Esophagus squamous epithelium (tissue), 5 donors: ENCODE measurements at regions of chr19 and their contacts with region 1.

Region 1: GRCh38 chr19:36172852-36173251 is 20.6 kb upstream of the COX7A1 start:
- DNase-seq: no peak
- H3K4me3 ChIP-seq: no peak overlapping the region
- H3K27ac ChIP-seq: no peak overlapping the region
- H3K4me1 ChIP-seq: peaks cover 10 to 26% (median 15%) of the 10 kb centered on the region in 3 donors
- H3K27me3 ChIP-seq: no peaks in the 10 kb centered on the region
- CTCF ChIP-seq: no peak
- POLR2A ChIP-seq: no peak

Region 2: DNA sequence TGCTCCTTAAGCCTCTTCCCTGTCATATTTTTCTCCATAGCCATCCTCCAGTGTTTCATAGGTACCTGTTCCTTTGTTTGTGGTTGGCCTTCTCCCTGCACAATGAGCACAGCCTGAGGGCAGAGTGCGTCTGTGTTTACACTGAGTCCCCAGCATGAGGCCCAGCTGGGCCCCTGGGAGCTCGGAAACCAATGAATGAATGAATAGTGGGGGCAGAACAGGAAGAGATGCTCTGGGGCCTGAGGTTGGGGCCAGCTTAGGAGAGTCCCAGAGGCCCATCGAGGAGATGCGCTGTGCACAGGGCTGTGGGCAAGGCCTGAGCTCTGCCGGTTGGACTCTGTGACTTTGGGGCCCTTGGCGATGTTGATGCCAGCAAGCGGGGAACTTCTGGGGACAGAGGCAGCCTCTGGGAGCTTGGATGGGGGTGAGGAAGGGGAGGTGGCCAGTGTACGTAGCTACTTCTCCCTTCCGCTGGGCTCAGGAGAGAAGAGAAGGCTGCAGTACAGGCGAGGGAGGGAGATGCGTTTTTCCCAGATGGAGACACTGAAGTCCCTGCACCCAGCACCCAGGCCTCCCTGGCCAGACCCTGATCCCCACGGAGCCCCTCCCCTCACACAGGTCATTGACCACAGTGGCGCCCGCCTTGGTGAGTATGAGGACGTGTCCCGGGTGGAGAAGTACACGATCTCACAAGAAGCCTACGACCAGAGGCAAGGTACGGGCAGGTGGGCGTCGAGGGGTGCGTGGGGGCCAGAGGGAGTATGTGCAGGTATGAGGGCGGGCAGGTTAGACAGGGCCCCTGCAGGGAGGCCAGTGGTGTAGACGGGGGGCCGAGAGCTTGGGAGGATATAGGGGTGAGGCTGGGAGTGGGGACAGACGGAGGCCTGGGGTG is 52.5 kb before region 1 on chr19:
- intact Hi-C with region 1: loop called (anchors 5 kb)
- DNase-seq: no peak
- H3K4me3 ChIP-seq: no peak overlapping the region
- H3K27ac ChIP-seq: no peak overlapping the region
- H3K4me1 ChIP-seq: peaks cover 9 to 21% (median 15%) of the 10 kb centered on the region in 3 donors
- H3K27me3 ChIP-seq: no peaks in the 10 kb centered on the region
- CTCF ChIP-seq: no peak
- POLR2A ChIP-seq: no peak